Heart left ventricle (tissue), 16 donors: ENCODE measurements at regions of chr2 and their contacts with region 1.

Region 1: GRCh38 chr2:178414266-178415247 is 36.4 kb downstream of the PRKRA start:
- DNase-seq: peak; percentile 87 to 93 (median 91)
- ATAC-seq: peak; percentile 94 to 97 (median 97)
- H3K4me3 ChIP-seq: peak overlapping the region; percentile 41 to 88 (median 66)
- H3K27ac ChIP-seq: peak overlapping the region; percentile 86 to 97 (median 92)
- H3K4me1 ChIP-seq: peaks cover 0 to 22% (median 6%) of the 10 kb centered on the region in 12 donors
- H3K27me3 ChIP-seq: no peaks in the 10 kb centered on the region
- CTCF ChIP-seq: peak; percentile 81 to 96 (median 90)
- POLR2A ChIP-seq: peak in 1 of 2 donors; percentile 46

Region 2: DNA sequence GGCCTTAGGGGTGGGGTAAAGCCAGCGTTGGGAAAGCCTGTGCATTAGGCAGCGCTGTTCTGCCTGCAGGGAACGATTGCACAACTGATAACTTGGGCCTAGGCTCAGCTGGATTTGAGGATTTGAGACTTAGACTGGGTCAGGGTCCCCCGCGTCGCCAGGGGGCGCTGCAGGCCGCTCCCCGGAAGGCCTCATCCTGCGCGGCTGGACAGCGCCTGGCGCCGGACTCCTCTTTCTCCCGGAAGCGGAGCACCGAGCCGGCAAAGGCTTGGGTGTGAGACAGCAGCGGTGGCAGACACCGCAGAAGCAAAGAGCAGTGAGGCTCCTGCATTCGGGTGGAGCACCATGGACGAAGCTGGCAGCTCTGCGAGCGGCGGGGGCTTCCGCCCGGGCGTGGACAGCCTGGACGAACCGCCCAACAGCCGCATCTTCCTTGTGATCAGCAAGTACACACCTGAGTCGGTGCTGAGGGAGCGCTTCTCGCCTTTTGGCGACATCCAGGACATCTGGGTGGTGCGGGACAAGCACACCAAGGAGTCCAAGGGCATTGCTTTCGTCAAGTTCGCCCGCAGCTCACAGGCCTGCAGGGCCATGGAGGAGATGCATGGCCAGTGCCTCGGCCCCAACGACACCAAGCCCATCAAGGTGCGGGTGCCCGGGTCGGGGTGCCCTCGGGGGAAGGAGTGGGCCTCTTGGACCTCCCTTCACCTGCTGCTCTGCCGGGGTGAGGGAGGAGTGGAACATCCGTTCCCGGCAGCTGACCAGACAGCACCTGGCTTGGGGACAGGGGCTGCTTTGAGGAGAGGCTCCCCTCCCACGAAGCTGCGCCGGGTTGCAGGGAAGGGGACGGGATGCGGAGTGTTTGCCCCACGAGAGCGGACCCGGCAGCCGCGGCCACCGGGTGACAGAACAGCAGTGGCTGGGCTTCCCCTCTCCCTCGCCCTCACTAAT is 302.1 kb before region 1 on chr2 and contains the start of gene RBM45:
- intact Hi-C with region 1: loop called in 6 of 10 experiments (anchors 2 to 10 kb)
- DNase-seq: peak; percentile 85 to 96 (median 93)
- ATAC-seq: peak; percentile 95 to 99 (median 99)
- H3K4me3 ChIP-seq: peak within 1 kb of the TSS; percentile 63 to 98 (median 92)
- H3K27ac ChIP-seq: peak within 1 kb of the TSS; percentile 49 to 89 (median 79)
- H3K4me1 ChIP-seq: peaks cover 0 to 26% (median 10%) of the 10 kb centered on the region in 12 donors
- H3K27me3 ChIP-seq: no peaks in the 10 kb centered on the region
- CTCF ChIP-seq: peak; percentile 96 to 99 (median 98)
- POLR2A ChIP-seq: peak in 1 of 2 donors; percentile 52
- total RNA-seq, gene RBM45: 3.8 to 11.2 (median 6.8) TPM

Region 3: GRCh38 chr2:178136321-178137025 is 278.1 kb before region 1 on chr2:
- intact Hi-C with region 1: loop called in 2 of 10 experiments (anchors 5 kb)
- DNase-seq: no peak
- ATAC-seq: no peak
- H3K4me3 ChIP-seq: no peak overlapping the region
- H3K27ac ChIP-seq: no peak overlapping the region
- H3K4me1 ChIP-seq: peaks cover 0 to 3% (median 0%) of the 10 kb centered on the region in 12 donors
- H3K27me3 ChIP-seq: no peaks in the 10 kb centered on the region
- CTCF ChIP-seq: no peak
- POLR2A ChIP-seq: no peak

Region 4: DNA sequence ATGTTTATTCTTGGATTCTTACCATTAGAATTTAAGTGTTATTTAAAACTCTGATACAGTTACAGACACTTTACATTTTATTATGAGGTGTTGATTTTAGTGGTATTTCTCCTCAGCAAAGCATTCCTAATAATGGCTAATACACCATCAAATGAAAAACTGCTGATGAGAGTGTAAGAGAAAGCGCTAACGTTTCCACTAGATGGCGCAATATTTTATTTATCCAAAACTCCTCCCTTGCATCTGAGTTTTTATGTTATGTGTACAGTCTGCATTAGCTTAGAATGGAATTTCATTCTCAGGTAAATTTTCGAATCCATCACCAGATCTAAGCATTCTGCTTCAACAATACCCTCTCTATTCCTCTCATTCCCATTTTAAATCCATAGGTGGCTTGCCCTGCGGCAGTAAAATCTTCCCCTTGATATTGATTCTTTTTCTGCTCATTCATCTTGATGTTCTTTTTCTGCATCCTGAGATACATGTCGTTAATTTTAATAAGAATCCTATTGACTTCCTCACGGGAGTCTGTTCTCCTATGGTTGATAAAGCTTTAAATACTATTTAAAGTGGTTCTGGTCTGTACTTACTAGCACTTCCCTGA is 17.5 kb before region 1 on chr2:
- intact Hi-C with region 1: loop called in 3 of 10 experiments (anchors 1 kb)
- DNase-seq: no peak
- ATAC-seq: peak in 3 of 4 donors; percentile 61 to 71 (median 63)
- H3K4me3 ChIP-seq: no peak overlapping the region
- H3K27ac ChIP-seq: no peak overlapping the region
- H3K4me1 ChIP-seq: peaks cover 0 to 3% (median 0%) of the 10 kb centered on the region in 12 donors
- H3K27me3 ChIP-seq: no peaks in the 10 kb centered on the region
- CTCF ChIP-seq: peak; percentile 55 to 78 (median 72)
- POLR2A ChIP-seq: no peak

Region 5: GRCh38 chr2:178478439-178479274 is 64.1 kb after region 1 on chr2 and contains the start of gene FKBP7:
- intact Hi-C with region 1: loop called in 1 of 10 experiments (anchors 2 kb)
- DNase-seq: peak; percentile 88 to 93 (median 90)
- ATAC-seq: peak; percentile 82 to 90 (median 83)
- H3K4me3 ChIP-seq: peak within 1 kb of the TSS; percentile 42 to 85 (median 72)
- H3K27ac ChIP-seq: peak within 1 kb of the TSS; percentile 49 to 97 (median 94)
- H3K4me1 ChIP-seq: peaks cover 5 to 57% (median 40%) of the 10 kb centered on the region in 12 donors
- H3K27me3 ChIP-seq: no peaks in the 10 kb centered on the region
- CTCF ChIP-seq: peak; percentile 47 to 77 (median 67)
- POLR2A ChIP-seq: peak in 1 of 2 donors; percentile 68
- total RNA-seq, gene FKBP7: 6.2 to 11.8 (median 9.0) TPM